ENCODE measurements at regions of chr17 and their contacts with region 1.

Region 1: GRCh38 chr17:73365906-73366623 is 54.3 kb upstream of the CDC42EP4 start:
- DNase-seq: no peak
- ATAC-seq: no peak
- H3K4me3 ChIP-seq: no peak overlapping the region
- H3K27ac ChIP-seq: peak overlapping the region in 1 of 2 experiments; percentile 24; a peak in 1 of 6 replicates
- H3K4me1 ChIP-seq: 0 out of 3 replicates have a peak, but pooled peaks cover 2% of the 10 kb centered on the region
- CTCF ChIP-seq: no peak
- EP300 ChIP-seq: no peak
- POLR2A ChIP-seq: no peak
- RAD21 ChIP-seq: no peak

Region 2: DNA sequence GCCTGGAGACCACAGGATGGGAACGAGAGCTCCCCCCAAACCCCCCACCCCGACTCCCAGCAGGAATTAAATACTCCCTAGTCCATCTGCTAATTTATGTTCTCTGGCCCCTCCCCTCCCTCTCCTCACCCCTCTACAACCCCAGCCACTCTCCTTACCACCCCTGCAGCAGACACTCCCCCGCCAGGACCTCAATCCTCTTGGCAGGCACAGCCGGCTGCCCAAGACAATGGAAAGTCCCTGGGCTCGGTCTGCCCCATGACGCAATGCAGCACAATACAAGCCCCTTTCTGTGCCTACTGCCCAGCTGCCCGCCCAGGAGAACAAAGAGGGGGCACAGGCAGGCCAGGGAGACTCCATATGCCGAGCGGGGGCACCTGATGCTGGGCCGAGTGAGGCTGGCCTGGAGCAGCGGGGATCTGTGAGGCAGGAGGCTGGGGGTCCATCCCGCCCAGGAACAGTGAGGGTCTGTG is 24.0 kb before region 1 on chr17:
- CTCF ChIA-PET with region 1: interaction called, 65 read pairs
- POLR2A ChIA-PET with region 1: no interaction called
- DNase-seq: peak; percentile 93
- ATAC-seq: peak; percentile 71 to 80
- H3K4me3 ChIP-seq: no peak overlapping the region
- H3K27ac ChIP-seq: peak overlapping the region; percentile 86 to 93
- H3K4me1 ChIP-seq: peaks cover 55% of the 10 kb centered on the region
- CTCF ChIP-seq: no peak
- EP300 ChIP-seq: peak in 1 of 2 experiments; percentile 54; a peak in 1 of 5 replicates
- POLR2A ChIP-seq: no peak
- RAD21 ChIP-seq: no peak